MCF 10A (cell line): ENCODE measurements at regions of chr21 and their contacts with region 1.

Region 1: GRCh38 chr21:14259747-14260146 is 43.8 kb downstream of the RBM11 start:
- DNase-seq: peak; percentile 65
- H3K4me3 Mint-ChIP-seq: no peak overlapping the region
- H3K27ac Mint-ChIP-seq: no peak overlapping the region
- H3K4me1 Mint-ChIP-seq: no peaks in the 10 kb centered on the region
- H3K27me3 Mint-ChIP-seq: no peaks in the 10 kb centered on the region
- CTCF ChIP-seq: peak; percentile 56

Region 2: DNA sequence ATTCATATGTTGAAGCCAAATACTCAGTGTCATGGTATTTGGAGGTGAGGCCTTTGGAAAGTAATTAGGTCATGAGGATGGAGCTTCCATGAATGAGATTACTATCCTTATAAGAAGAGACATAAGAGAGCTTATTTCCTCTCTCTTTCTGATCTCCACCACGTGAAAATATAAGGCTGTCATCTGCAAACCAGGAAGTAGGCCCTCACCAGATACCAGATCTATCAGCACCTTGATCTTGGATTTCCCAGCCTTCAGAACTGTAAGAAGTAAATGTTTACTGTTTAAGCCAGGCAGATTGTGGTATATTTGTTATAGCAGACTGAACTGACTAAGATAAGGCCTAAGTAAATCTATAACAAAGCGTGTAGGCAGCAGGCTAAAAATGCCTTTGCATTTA is 18.4 kb before region 1 on chr21:
- CTCF ChIA-PET with region 1: interaction called, 15 read pairs
- POLR2A ChIA-PET with region 1: interaction called, 4 read pairs
- intact Hi-C with region 1: no loop called
- DNase-seq: no peak
- H3K4me3 Mint-ChIP-seq: no peak overlapping the region
- H3K27ac Mint-ChIP-seq: no peak overlapping the region
- H3K4me1 Mint-ChIP-seq: no peaks in the 10 kb centered on the region
- H3K27me3 Mint-ChIP-seq: no peaks in the 10 kb centered on the region
- CTCF ChIP-seq: no peak

Region 3: GRCh38 chr21:14285147-14285761 is 25.5 kb after region 1 on chr21:
- CTCF ChIA-PET with region 1: interaction called, 10 read pairs
- POLR2A ChIA-PET with region 1: no interaction called
- intact Hi-C with region 1: no loop called
- DNase-seq: no peak
- H3K4me3 Mint-ChIP-seq: no peak overlapping the region
- H3K27ac Mint-ChIP-seq: no peak overlapping the region
- H3K4me1 Mint-ChIP-seq: no peaks in the 10 kb centered on the region
- H3K27me3 Mint-ChIP-seq: no peaks in the 10 kb centered on the region
- CTCF ChIP-seq: no peak

Region 4: DNA sequence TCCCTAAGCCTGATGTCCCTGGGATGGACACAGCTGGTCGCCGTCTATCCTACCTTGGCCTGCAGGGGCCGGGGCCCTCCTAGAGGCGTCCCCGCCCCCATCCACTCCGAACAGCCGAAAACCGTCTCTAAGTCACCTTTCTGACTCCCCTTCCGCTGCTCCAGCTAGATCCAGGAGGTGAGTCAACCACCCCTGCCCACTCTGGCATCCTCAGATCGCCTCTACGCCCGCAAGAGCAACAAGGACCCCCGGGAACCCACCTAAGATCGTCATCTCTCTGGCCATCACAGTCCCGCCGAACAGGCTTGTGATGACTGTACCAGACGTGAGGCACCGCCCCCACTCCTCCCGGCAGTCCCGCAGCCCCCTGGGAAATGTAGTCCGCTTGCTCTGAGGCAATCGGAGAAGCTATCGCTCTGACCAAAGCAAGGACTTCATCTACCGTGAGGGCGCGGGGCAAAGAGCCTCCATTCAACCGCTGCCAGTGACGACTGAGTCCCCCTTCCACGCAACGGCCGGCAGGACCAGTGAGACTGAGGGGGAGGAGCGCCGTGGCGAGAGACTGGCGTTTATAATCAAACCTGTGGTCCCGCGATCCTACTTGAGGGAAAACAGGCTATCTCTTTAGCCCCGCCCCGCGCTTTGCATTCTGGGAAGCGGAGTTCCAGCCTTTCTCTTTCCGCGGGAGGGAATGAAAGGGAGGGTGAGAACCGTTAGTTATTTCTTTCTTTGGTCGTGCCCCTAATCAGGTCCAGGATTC is 123.3 kb after region 1 on chr21 and contains the start of gene HSPA13:
- CTCF ChIA-PET with region 1: no interaction called
- POLR2A ChIA-PET with region 1: interaction called, 5 read pairs
- intact Hi-C with region 1: loop called (anchors 5 kb)
- DNase-seq: peak; percentile 100
- H3K4me3 Mint-ChIP-seq: peak within 1 kb of the TSS; percentile 97
- H3K27ac Mint-ChIP-seq: peak within 1 kb of the TSS; percentile 97
- H3K4me1 Mint-ChIP-seq: peaks cover 8% of the 10 kb centered on the region
- H3K27me3 Mint-ChIP-seq: no peaks in the 10 kb centered on the region
- CTCF ChIP-seq: no peak
- total RNA-seq, gene HSPA13: 97.5 and 126 TPM in 2 replicates

Region 5: GRCh38 chr21:14864211-14865021 is 604.7 kb after region 1 on chr21:
- CTCF ChIA-PET with region 1: interaction called, 6 read pairs
- POLR2A ChIA-PET with region 1: no interaction called
- intact Hi-C with region 1: loop called (anchors 2 kb)
- DNase-seq: peak; percentile 78
- H3K4me3 Mint-ChIP-seq: no peak overlapping the region
- H3K27ac Mint-ChIP-seq: peak overlapping the region; percentile 29
- H3K4me1 Mint-ChIP-seq: peaks cover 30% of the 10 kb centered on the region
- H3K27me3 Mint-ChIP-seq: no peaks in the 10 kb centered on the region
- CTCF ChIP-seq: peak; percentile 45

Region 6: DNA sequence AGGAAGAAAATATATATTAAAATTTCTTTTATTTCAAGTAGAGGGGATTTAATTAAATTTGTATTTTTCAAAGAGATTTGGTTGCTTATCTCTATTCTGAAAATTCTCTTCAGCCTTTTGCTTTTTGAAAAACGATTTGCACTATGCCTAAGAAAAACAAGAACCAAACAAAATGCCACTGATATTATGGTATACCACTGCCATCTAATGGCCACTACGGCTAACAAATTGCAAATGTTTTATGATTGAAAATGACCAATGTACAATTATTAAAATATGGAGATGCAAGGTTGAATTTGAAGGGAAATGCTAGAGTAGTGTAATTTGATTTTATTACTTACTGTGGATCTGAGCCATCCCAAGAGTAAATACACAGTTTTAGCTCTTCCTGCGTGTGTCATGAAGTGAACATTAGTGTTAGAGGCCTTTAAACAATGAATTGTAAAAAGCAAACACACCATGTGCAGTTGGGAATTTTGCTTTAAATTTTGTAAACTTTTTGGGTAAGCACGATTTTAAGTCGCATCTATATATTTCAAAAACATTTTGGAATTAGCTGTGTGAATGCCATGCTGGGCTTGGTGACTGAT is 1332.6 kb after region 1 on chr21:
- CTCF ChIA-PET with region 1: interaction called, 24 read pairs
- POLR2A ChIA-PET with region 1: no interaction called
- intact Hi-C with region 1: loop called (anchors 2 kb)
- DNase-seq: peak; percentile 60
- H3K4me3 Mint-ChIP-seq: no peak overlapping the region
- H3K27ac Mint-ChIP-seq: no peak overlapping the region
- H3K4me1 Mint-ChIP-seq: no peaks in the 10 kb centered on the region
- H3K27me3 Mint-ChIP-seq: no peaks in the 10 kb centered on the region
- CTCF ChIP-seq: peak; percentile 57